ENCODE measurements at regions of chr2 and their contacts with region 1.

Region 1: DNA sequence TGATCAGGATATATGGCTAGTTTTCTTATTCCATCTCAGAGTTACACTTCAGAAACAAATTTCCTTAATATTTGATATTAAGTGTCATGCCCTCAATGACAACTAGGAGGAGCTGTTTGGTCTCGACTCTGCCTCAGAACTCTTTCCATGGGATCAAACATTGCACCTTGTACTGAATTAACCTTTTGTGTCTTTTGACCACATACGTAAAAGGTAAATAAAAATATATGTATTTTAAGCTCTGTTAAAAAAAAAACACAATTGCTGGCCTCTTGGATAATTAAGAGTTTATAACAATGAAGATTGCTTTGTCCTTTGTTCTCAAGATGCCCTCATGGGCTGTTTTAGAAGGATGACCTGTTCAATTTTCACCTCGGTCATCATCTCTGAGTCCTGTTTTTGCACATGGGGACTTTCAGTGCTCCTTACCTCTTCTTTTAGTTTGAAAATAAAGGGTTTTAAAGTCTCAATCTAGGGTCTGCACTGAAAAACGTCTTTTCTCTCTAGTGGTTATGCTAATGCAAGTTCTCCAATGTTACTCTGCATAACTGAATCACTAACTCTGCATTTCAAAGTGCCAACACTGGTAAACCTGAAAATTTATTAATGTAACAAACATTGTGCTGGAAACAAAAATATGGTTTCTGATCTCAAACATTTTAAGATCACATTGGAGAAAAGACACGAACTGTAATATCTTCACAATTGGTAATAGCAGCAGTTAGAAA is 18.8 kb upstream of the FN1 start:
- DNase-seq: no peak
- ATAC-seq: peak; percentile 84 to 91 (median 89)
- H3K4me3 ChIP-seq: no peak overlapping the region
- H3K27ac ChIP-seq: no peak overlapping the region
- H3K4me1 ChIP-seq: no peaks in the 10 kb centered on the region
- H3K27me3 ChIP-seq: no peaks in the 10 kb centered on the region
- CTCF ChIP-seq: peak; percentile 77 to 88 (median 80)
- POLR2A ChIP-seq: no peak

Region 2: DNA sequence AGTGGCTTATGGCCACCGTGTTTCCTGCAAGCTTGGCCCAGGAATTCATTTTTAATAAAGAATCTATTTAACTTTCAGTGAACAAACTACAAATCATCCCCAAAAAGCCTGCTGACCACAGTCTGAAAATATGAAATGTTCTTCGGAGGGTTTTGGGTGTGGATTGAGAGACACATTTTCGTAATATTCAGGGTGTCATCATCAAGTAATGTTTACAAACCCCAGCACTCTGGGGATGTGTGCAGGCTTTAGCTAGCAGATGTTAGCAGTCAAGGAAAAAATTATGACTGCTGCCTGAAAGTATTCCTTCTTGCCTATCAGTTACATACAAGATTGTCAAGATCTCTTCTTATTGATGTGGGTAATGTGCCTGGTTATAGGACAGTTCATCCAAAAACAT is 125.1 kb after region 1 on chr2:
- intact Hi-C with region 1: no loop called
- DNase-seq: no peak
- ATAC-seq: peak in 1 of 4 donors; percentile 49
- H3K4me3 ChIP-seq: no peak overlapping the region
- H3K27ac ChIP-seq: no peak overlapping the region
- H3K4me1 ChIP-seq: no peaks in the 10 kb centered on the region
- H3K27me3 ChIP-seq: no peaks in the 10 kb centered on the region
- CTCF ChIP-seq: no peak
- POLR2A ChIP-seq: no peak

Region 3: GRCh38 chr2:215917953-215918620 is 463.4 kb after region 1 on chr2:
- intact Hi-C with region 1: loop called (anchors 10 kb)
- DNase-seq: no peak
- ATAC-seq: no peak
- H3K4me3 ChIP-seq: no peak overlapping the region
- H3K27ac ChIP-seq: no peak overlapping the region
- H3K4me1 ChIP-seq: no peaks in the 10 kb centered on the region
- H3K27me3 ChIP-seq: no peaks in the 10 kb centered on the region
- CTCF ChIP-seq: no peak
- POLR2A ChIP-seq: no peak

Measured in right lobe of liver (tissue), 6 donors.